ENCODE measurements at regions of chr4 and their contacts with region 1.

Region 1: DNA sequence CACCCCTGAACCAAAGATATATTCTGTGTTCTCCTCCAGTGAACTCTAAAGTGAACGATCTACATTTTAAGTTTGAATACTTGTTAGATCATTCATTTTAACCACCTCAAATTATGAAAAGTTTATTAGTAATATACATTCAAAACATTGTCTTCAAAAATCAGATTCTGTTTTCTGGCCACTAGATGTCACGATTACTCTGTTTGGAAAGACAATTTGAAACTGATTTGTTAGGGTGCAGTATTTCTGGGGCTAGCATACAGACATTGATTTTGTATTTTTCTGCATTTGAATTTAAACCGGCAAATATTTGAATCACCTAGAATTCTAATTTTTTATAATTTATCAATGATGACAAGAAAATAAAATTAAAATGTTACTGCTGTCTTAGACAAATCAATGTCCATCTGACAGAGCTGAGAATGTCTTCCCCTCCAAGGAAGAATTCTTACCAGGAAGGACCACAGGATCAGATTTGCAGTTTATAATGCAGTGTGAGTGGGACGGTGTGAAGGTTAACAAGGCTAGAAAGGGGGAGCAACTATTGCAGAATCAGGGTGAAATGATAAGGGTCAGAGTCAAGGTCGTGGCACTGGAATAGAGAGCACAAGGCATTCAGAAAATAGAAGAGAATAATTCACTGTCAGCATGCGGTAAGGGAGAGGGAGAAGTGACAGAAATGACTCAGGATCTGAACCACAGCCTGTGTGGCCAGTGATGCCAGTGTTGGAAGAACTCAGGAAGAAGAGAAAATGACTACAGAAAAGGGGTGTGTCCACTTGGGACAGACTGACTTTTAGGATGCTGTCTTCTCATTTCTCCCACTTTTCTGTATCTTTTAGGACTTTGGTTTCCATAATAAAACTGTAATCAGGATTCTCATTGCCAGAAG is 91.6 kb downstream of the ANXA10 start:
- DNase-seq: no peak
- ATAC-seq: peak in 1 of 2 donors; percentile 68

Region 2: DNA sequence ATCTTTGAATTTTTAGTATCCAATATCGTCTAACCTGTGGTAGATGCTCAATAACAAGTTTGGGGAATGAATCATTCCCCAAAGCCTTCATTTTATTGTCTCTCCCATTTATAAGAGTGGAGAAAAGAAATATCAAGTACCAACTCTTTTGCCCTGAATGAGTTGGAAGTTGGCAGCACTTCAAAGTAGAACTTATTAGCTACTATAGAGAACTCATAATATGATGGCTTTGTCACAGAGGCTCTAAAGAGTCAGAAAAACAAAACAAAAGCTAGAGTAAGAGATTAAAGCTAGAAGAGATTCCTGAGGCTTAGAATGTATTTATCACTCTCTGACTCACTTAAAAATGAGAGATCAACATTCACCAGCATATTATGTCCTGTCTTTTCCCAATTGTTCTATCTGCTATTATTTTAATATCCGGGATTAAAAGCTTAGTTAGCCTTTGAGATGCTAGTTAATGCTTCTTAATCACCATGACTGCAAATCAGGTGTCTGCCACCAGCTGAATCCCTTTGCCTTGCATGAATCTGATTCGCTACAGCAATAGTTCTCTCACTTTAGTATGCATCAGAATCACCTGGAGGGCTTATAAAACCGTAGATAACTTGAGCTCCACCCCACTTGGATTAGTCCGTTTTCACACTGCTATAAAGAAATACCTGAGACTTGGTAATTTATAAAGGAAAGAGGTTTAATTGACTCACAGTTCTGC is 390.8 kb after region 1 on chr4:
- intact Hi-C with region 1: loop called in 1 of 2 experiments (anchors 10 kb)
- DNase-seq: no peak
- ATAC-seq: no peak

Measured in left cardiac atrium (tissue), 4 donors.